T-cell (primary cell): ENCODE measurements at regions of chr6 and their contacts with region 1.

Region 1: DNA sequence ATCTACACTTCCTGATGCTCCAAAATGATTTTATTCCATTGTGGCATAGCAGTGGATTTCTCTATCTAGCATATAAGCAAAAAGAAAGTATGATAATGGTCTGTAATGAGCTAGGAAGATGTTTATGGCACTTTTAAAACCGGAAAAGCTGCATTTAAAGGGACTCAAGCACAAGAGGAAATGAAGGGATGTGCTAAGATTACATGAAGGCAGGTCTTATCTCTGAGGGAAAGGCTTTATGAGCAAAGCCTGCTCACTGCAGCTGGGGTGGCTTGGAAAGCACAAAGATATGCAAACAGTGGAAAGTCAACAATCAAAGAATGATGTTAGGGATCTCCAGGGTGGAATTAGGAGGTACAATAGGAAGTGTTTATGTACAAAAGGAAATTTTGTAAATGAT is 138.2 kb downstream of the TENT5A start:
- DNase-seq: no peak
- ATAC-seq: no peak
- H3K4me3 ChIP-seq: no peak overlapping the region
- H3K4me3 Mint-ChIP-seq: no peak overlapping the region
- H3K27ac ChIP-seq: no peak overlapping the region
- H3K27ac Mint-ChIP-seq: no peak overlapping the region
- H3K4me1 ChIP-seq: no peaks in the 10 kb centered on the region
- H3K4me1 Mint-ChIP-seq: peaks cover 0 to 5% (median 3%) of the 10 kb centered on the region in 3 donors
- H3K27me3 ChIP-seq: no peaks in the 10 kb centered on the region
- H3K27me3 Mint-ChIP-seq: no peaks in the 10 kb centered on the region

Region 2: GRCh38 chr6:81331526-81331925 is 282.8 kb before region 1 on chr6:
- CTCF ChIA-PET with region 1: interaction called in 1 of 2 experiments, 11 read pairs
- POLR2A ChIA-PET with region 1: no interaction called
- DNase-seq: no peak
- ATAC-seq: no peak
- H3K4me3 ChIP-seq: no peak overlapping the region
- H3K4me3 Mint-ChIP-seq: no peak overlapping the region
- H3K27ac ChIP-seq: no peak overlapping the region
- H3K27ac Mint-ChIP-seq: no peak overlapping the region
- H3K4me1 ChIP-seq: no peaks in the 10 kb centered on the region
- H3K4me1 Mint-ChIP-seq: no peaks in the 10 kb centered on the region
- H3K27me3 ChIP-seq: no peaks in the 10 kb centered on the region
- H3K27me3 Mint-ChIP-seq: no peaks in the 10 kb centered on the region

Region 3: GRCh38 chr6:81601918-81602317 is 12.4 kb before region 1 on chr6:
- CTCF ChIA-PET with region 1: no interaction called
- POLR2A ChIA-PET with region 1: no interaction called
- DNase-seq: no peak
- ATAC-seq: no peak
- H3K4me3 ChIP-seq: no peak overlapping the region
- H3K4me3 Mint-ChIP-seq: no peak overlapping the region
- H3K27ac ChIP-seq: no peak overlapping the region
- H3K27ac Mint-ChIP-seq: no peak overlapping the region
- H3K4me1 ChIP-seq: no peaks in the 10 kb centered on the region
- H3K4me1 Mint-ChIP-seq: no peaks in the 10 kb centered on the region
- H3K27me3 ChIP-seq: no peaks in the 10 kb centered on the region
- H3K27me3 Mint-ChIP-seq: no peaks in the 10 kb centered on the region

Region 4: DNA sequence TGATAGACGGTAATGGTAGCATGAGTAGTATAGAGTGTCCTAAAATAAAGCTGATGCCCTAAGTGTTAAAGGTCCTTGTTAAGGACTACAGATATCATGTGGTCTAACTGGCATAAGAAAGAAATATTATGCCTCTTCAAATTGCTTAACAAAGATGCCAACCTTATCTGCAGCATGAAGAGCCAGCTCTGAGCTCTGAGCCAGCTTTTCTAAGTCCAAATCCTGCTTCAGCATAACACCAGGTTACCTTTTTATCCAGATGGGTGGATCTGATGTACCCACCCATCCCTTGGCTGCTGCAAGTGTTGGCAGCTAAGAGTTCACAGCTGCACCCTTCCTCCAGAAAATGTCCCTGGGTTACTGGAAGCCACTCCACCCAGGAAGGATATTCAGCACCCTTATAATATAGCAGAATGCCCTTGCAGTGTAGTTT is 54.3 kb after region 1 on chr6:
- CTCF ChIA-PET with region 1: no interaction called
- POLR2A ChIA-PET with region 1: no interaction called
- DNase-seq: no peak
- ATAC-seq: no peak
- H3K4me3 ChIP-seq: no peak overlapping the region
- H3K4me3 Mint-ChIP-seq: no peak overlapping the region
- H3K27ac ChIP-seq: no peak overlapping the region
- H3K27ac Mint-ChIP-seq: no peak overlapping the region
- H3K4me1 ChIP-seq: no peaks in the 10 kb centered on the region
- H3K4me1 Mint-ChIP-seq: no peaks in the 10 kb centered on the region
- H3K27me3 ChIP-seq: no peaks in the 10 kb centered on the region
- H3K27me3 Mint-ChIP-seq: no peaks in the 10 kb centered on the region

Region 5: GRCh38 chr6:81797591-81797990 is 183.3 kb after region 1 on chr6:
- CTCF ChIA-PET with region 1: no interaction called
- POLR2A ChIA-PET with region 1: no interaction called
- DNase-seq: no peak
- ATAC-seq: no peak
- H3K4me3 ChIP-seq: no peak overlapping the region
- H3K4me3 Mint-ChIP-seq: no peak overlapping the region
- H3K27ac ChIP-seq: no peak overlapping the region
- H3K27ac Mint-ChIP-seq: no peak overlapping the region
- H3K4me1 ChIP-seq: no peaks in the 10 kb centered on the region
- H3K4me1 Mint-ChIP-seq: no peaks in the 10 kb centered on the region
- H3K27me3 ChIP-seq: no peaks in the 10 kb centered on the region
- H3K27me3 Mint-ChIP-seq: peaks cover 0 to 7% of the 10 kb centered on the region in 2 donors

Region 6: DNA sequence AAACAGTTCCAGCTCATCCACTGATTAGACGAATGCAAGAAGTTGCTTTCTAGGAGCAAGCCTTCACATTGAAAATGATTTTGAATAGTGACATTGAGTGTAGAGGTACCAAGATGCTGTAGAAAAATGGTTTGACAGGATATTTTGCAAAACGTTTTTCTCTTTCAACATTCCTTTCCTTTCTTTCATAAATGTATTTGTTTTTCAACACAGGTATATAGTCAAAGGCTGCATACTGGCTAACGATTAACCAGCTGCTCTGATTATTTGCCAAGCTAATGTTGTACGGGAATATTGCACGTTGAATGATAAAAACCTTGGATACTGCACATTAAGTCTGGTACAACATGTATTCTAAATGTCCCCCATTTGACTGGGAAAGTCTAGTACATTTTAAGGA is 217.0 kb after region 1 on chr6:
- CTCF ChIA-PET with region 1: no interaction called
- POLR2A ChIA-PET with region 1: no interaction called
- DNase-seq: no peak
- ATAC-seq: no peak
- H3K4me3 ChIP-seq: no peak overlapping the region
- H3K4me3 Mint-ChIP-seq: no peak overlapping the region
- H3K27ac ChIP-seq: no peak overlapping the region
- H3K27ac Mint-ChIP-seq: no peak overlapping the region
- H3K4me1 ChIP-seq: no peaks in the 10 kb centered on the region
- H3K4me1 Mint-ChIP-seq: no peaks in the 10 kb centered on the region
- H3K27me3 ChIP-seq: no peaks in the 10 kb centered on the region
- H3K27me3 Mint-ChIP-seq: no peaks in the 10 kb centered on the region